Activated B cell treated with CpG ODN at 0.5 μM for 24 hours (primary cell): ENCODE measurements at regions of chr1 and their contacts with region 1.

Region 1: GRCh38 chr1:156524481-156524869 is 23.9 kb upstream of the MEF2D start:
- DNase-seq: no peak
- ATAC-seq: peak; percentile 20
- H3K4me3 Mint-ChIP-seq: peak overlapping the region; percentile 44
- H3K27ac Mint-ChIP-seq: peak overlapping the region; percentile 67
- H3K4me1 Mint-ChIP-seq: peaks cover 19% of the 10 kb centered on the region
- H3K27me3 Mint-ChIP-seq: no peaks in the 10 kb centered on the region
- CTCF ChIP-seq: no peak

Region 2: DNA sequence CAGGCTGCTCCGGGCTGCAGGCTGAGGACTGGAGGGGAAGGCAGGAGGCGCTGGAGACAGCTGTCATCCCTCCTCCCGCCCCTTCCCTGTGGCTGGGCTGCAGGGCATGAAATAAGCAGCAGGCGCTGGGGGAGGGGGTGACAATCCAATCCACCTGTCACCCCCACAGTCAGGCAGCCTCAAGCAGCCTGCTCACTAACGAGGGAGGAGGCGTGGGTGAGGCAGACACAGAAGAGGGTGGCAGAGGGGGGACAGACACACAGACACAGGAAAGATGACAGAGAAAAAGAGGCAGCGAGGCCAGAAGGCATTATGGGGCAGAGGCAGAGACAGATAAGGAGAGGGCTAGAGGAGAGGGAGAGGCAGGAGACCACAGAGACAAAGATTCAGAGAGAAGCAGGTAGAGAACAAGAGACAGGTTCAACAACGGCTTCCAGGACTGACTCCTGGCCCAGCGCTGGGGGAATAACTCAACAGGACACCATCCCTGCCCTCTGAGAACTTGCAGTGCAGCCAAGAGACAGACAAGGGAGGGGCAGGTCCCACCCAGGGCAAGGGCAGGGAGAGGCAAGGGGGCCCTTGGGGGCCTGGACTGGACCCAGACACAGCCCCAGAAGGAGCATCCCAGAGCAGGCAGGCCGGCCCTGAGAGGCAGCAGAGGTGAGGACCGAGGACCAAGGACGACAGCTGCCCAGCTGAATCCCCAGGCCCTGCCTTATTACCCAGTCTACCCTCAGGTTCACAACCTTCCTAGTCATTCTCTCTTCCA is 35.1 kb before region 1 on chr1:
- CTCF ChIA-PET with region 1: no interaction called
- POLR2A ChIA-PET with region 1: interaction called, 13 read pairs
- intact Hi-C with region 1: no loop called
- DNase-seq: no peak
- ATAC-seq: no peak
- H3K4me3 Mint-ChIP-seq: peak overlapping the region; percentile 88
- H3K27ac Mint-ChIP-seq: peak overlapping the region; percentile 97
- H3K4me1 Mint-ChIP-seq: peaks cover 96% of the 10 kb centered on the region
- H3K27me3 Mint-ChIP-seq: no peaks in the 10 kb centered on the region
- CTCF ChIP-seq: no peak

Region 3: DNA sequence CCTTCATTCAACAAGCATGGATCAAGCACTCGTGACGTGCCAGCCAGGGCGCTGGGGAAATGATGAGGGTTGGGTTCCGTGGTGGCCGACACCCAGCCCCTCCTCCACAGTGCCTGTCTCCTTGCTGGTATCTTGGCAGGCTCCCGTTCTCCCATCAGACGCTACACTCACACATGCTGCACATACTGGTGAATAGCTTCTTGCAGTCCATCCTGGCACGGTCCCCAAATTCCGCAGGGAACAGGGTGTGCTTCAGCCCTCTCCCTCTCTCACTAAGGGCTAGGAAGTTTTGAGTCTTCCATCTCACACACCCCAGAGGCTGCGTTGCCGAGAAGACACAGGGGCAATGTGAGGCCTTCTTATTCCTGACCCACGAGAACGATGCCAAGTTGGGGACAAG is 13.8 kb before region 1 on chr1:
- CTCF ChIA-PET with region 1: interaction called, 5 read pairs
- POLR2A ChIA-PET with region 1: interaction called, 15 read pairs
- intact Hi-C with region 1: loop called (anchors 2 kb)
- DNase-seq: no peak
- ATAC-seq: no peak
- H3K4me3 Mint-ChIP-seq: no peak overlapping the region
- H3K27ac Mint-ChIP-seq: no peak overlapping the region
- H3K4me1 Mint-ChIP-seq: peaks cover 32% of the 10 kb centered on the region
- H3K27me3 Mint-ChIP-seq: no peaks in the 10 kb centered on the region
- CTCF ChIP-seq: no peak

Region 4: GRCh38 chr1:156571949-156572662 is 47.6 kb after region 1 on chr1 and contains the start of gene IQGAP3:
- CTCF ChIA-PET with region 1: no interaction called
- POLR2A ChIA-PET with region 1: interaction called, 7 read pairs
- intact Hi-C with region 1: loop called (anchors 5 kb)
- DNase-seq: peak; percentile 69
- ATAC-seq: peak; percentile 100
- H3K4me3 Mint-ChIP-seq: peak within 1 kb of the TSS; percentile 83
- H3K27ac Mint-ChIP-seq: peak within 1 kb of the TSS; percentile 42
- H3K4me1 Mint-ChIP-seq: peaks cover 13% of the 10 kb centered on the region
- H3K27me3 Mint-ChIP-seq: peaks cover 21% of the 10 kb centered on the region
- CTCF ChIP-seq: no peak
- total RNA-seq, gene IQGAP3: 0.22 and 0.29 TPM in 2 replicates